Esophagus muscularis mucosa (tissue), 4 donors: ENCODE measurements at regions of chr1 and their contacts with region 1.

Region 1: GRCh38 chr1:246002725-246003441 is 504.2 kb downstream of the SMYD3 start:
- DNase-seq: peak; percentile 96
- H3K4me3 ChIP-seq: no peak overlapping the region
- H3K27ac ChIP-seq: no peak overlapping the region
- H3K4me1 ChIP-seq: peaks cover 8 to 25% (median 18%) of the 10 kb centered on the region in 4 donors
- H3K27me3 ChIP-seq: no peaks in the 10 kb centered on the region
- CTCF ChIP-seq: peak; percentile 82 to 90 (median 88)
- EP300 ChIP-seq: no peak
- POLR2A ChIP-seq: no peak

Region 2: DNA sequence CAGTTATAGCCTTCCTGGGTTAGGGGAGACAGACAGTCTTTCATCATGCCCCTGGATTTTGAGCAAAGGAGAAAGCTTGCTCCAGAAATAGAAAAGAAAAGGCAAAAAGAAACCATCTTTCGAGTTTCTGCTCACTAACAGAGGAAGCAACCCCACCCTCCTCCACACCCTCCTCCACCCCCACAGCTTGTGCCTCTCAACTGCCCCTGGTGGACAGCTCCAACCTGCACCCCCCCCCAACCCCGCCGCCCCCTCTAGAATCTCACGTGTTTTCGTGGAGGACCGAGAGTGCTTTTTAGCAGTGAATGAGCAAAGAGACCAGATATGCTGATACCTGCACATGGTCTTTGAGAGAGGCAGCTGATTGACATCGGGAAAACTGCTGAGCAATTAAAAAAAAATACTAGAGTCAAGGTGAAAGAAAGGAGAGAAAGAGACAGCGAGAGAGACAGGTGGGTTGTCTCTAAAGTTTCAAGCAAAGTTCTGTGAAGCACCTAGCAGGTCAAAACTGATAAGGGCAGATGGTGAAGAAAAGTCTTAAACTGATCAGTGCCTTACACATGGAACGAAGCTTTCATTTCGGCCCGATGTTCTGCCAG is 489.8 kb before region 1 on chr1:
- intact Hi-C with region 1: loop called (anchors 10 kb)
- DNase-seq: no peak
- H3K4me3 ChIP-seq: peak overlapping the region in 2 of 4 donors; percentile 12 to 17
- H3K27ac ChIP-seq: no peak overlapping the region
- H3K4me1 ChIP-seq: peaks cover 0 to 11% (median 0%) of the 10 kb centered on the region in 4 donors
- H3K27me3 ChIP-seq: peaks cover 0 to 8% (median 0%) of the 10 kb centered on the region in 4 donors
- CTCF ChIP-seq: peak in 1 of 3 experiments; percentile 5
- EP300 ChIP-seq: no peak
- POLR2A ChIP-seq: no peak

Region 3: GRCh38 chr1:245874942-245875580 is 127.8 kb before region 1 on chr1:
- intact Hi-C with region 1: loop called (anchors 10 kb)
- DNase-seq: no peak
- H3K4me3 ChIP-seq: peak overlapping the region in 3 of 4 donors; percentile 11 to 22 (median 20)
- H3K27ac ChIP-seq: peak overlapping the region in 3 of 4 donors; percentile 4 to 62 (median 25)
- H3K4me1 ChIP-seq: peaks cover 22 to 27% (median 26%) of the 10 kb centered on the region in 4 donors
- H3K27me3 ChIP-seq: no peaks in the 10 kb centered on the region
- CTCF ChIP-seq: no peak
- EP300 ChIP-seq: peak; percentile 54
- POLR2A ChIP-seq: no peak

Region 4: DNA sequence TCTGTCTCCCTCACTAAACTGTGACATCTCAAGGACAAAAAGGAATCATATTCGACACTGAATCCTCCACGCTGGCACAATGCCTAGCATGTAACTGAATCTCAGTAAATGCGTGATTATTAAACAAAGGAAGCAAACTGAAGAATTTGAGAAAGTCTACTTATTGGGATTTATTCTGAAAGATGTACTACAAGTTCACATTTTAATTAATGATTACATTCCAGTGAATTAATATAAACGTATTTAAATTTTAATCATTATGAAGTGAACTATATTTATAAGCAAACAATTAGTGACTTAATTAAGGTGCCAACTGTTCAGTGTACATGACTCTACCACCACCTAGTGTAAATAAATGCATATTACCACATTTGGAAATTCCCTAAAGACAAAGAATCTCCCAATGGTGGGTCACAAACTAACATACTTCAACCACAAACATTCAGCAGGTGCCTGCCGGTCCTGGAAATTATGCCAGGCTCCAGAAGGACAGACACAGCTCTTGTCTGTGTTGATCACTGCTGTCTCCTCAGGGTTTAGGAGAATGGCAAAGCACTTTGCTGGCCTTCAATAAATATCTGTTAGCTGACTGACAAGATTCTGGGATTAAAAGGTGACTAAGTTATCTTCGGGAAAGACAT is 447.8 kb after region 1 on chr1:
- intact Hi-C with region 1: loop called (anchors 5 kb)
- DNase-seq: no peak
- H3K4me3 ChIP-seq: no peak overlapping the region
- H3K27ac ChIP-seq: no peak overlapping the region
- H3K4me1 ChIP-seq: peaks cover 5 to 58% (median 47%) of the 10 kb centered on the region in 4 donors
- H3K27me3 ChIP-seq: no peaks in the 10 kb centered on the region
- CTCF ChIP-seq: peak; percentile 55 to 75 (median 68)
- EP300 ChIP-seq: no peak
- POLR2A ChIP-seq: no peak